ENCODE measurements at regions of chr18 and their contacts with region 1.

Region 1: DNA sequence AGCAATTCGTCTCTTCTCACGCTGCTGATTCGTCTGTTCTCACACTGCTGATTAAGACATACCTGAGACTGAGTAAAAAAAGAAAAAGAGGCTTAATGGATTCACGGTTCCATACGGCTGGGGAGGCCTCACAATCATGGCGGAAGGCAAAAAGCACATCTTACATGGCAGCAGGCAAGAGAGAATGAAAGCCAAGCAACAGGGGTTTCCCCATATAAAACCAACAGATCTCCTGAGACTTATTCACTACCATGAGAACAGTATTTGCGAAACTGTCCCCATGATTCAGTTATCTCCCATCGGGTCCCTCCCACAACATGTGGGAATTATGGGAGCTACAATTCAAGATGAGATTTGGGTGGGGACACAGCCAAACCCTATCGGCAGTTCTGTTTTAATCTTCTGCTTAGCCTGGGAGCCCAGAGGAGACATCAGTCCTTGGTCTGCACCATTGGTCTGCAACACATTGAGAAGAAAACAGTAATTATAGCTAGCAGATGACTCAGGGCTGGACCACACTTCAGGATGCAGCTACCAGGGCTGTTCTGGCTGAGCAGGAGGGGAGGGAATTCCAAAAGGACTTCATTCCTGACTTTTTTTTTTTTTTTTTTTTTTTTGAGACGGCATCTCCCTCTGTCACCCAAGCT is 69.4 kb downstream of the CABLES1 start:
- DNase-seq: no peak
- ATAC-seq: peak; percentile 59
- H3K4me3 Mint-ChIP-seq: no peak overlapping the region
- H3K27ac Mint-ChIP-seq: peak overlapping the region; percentile 46
- H3K4me1 Mint-ChIP-seq: peaks cover 19% of the 10 kb centered on the region
- H3K27me3 Mint-ChIP-seq: peaks cover 12% of the 10 kb centered on the region
- CTCF ChIP-seq: no peak

Region 2: DNA sequence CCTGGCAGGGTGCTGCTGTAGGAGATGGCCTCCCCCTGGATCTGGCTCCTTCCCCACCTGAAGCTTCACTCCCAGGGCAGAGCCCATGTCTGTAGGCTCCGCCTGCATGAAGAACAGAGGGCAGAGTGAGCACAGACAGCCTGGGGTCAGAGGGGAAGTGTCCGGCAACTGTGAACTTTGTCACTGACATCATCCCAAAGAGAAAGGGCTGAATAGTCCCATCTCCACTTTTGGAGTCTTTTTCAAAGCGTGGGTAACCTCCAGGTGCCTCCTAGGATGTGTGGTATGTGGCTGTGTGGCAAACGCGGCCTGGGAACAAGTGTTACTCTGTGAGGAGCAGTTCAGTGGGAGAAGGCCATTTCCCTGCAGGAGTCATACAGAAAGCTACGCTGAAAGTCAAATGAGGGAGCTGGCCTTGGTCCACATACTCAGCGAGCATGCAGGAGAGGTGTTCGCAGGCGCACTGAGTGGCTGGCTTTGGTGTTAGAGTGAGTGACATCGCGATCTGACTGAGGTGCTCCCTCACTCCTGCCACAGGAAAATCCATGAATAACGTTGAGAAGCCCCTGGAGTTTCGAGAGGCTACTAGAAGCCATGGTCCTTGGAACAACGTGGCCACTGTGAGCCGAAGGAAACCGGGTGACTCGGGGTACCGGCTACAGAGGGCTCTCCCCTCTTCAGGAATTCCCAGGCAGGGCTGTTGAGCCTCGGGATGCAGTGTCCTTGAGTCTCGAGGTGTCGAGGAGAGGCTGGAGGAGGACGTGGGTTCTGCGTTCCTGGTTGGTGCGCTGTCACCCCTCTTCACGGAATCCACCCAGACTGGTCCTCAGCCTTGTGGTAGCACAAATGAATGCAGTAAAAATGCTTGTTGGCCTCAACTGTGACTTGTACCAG is 14.7 kb before region 1 on chr18:
- CTCF ChIA-PET with region 1: no interaction called
- POLR2A ChIA-PET with region 1: no interaction called
- intact Hi-C with region 1: loop called (anchors 2 kb)
- DNase-seq: no peak
- ATAC-seq: no peak
- H3K4me3 Mint-ChIP-seq: no peak overlapping the region
- H3K27ac Mint-ChIP-seq: no peak overlapping the region
- H3K4me1 Mint-ChIP-seq: peaks cover 3% of the 10 kb centered on the region
- H3K27me3 Mint-ChIP-seq: peaks cover 1% of the 10 kb centered on the region
- CTCF ChIP-seq: no peak